ENCODE measurements at regions of chr1 and their contacts with region 1.

Region 1: GRCh38 chr1:224851210-224851847 is 78.1 kb upstream of the DNAH14 start:
- DNase-seq: peak; percentile 85
- H3K4me3 Mint-ChIP-seq: no peak overlapping the region
- H3K27ac Mint-ChIP-seq: no peak overlapping the region
- H3K4me1 Mint-ChIP-seq: peaks cover 6% of the 10 kb centered on the region
- H3K27me3 Mint-ChIP-seq: peaks cover 9% of the 10 kb centered on the region
- CTCF ChIP-seq: peak; percentile 98

Region 2: DNA sequence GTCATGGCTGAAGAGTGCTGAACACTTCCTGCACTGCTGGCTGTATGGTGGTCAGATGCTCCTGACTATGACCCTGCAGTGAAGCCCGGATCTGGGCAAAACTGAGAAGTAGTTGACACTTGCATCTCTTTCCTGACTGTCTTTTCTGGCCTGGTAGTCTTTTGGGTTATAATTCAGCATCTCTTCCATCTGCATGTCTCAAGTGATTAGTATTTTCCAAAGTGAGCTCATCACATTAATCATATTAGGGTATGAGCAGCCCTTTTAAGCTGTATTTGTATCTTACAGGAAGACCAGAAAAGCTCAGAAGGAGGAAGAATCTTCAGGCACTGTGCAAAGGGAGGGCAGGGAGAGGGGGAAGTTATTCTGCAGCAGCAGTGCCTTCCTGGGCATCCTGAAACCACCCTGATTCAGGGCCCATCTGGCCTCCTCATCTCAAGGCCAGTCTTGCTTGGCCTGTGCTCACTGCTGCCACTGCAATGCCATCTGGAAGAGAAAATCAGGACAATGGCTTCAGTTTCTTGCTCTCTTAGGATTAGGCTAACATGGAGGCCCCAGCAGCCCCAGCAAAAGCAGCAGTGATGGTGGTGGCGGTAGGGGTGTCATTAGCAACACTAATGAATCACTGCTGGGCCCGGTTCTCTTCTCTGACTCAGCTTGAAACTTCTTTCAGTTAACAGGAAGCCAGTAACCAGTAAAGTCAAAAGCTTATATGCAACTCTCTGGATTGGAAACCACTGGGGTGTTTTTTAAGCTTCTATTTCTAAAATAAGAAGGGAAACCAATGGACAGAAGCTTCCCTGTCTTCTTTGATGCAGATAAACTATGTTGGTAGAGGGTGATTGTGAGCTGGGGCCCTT is 353.4 kb before region 1 on chr1:
- CTCF ChIA-PET with region 1: interaction called, 12 read pairs
- POLR2A ChIA-PET with region 1: interaction called, 3 read pairs
- intact Hi-C with region 1: no loop called
- DNase-seq: peak; percentile 97
- H3K4me3 Mint-ChIP-seq: peak overlapping the region; percentile 50
- H3K27ac Mint-ChIP-seq: peak overlapping the region; percentile 86
- H3K4me1 Mint-ChIP-seq: peaks cover 69% of the 10 kb centered on the region
- H3K27me3 Mint-ChIP-seq: no peaks in the 10 kb centered on the region
- CTCF ChIP-seq: peak; percentile 6

Region 3: DNA sequence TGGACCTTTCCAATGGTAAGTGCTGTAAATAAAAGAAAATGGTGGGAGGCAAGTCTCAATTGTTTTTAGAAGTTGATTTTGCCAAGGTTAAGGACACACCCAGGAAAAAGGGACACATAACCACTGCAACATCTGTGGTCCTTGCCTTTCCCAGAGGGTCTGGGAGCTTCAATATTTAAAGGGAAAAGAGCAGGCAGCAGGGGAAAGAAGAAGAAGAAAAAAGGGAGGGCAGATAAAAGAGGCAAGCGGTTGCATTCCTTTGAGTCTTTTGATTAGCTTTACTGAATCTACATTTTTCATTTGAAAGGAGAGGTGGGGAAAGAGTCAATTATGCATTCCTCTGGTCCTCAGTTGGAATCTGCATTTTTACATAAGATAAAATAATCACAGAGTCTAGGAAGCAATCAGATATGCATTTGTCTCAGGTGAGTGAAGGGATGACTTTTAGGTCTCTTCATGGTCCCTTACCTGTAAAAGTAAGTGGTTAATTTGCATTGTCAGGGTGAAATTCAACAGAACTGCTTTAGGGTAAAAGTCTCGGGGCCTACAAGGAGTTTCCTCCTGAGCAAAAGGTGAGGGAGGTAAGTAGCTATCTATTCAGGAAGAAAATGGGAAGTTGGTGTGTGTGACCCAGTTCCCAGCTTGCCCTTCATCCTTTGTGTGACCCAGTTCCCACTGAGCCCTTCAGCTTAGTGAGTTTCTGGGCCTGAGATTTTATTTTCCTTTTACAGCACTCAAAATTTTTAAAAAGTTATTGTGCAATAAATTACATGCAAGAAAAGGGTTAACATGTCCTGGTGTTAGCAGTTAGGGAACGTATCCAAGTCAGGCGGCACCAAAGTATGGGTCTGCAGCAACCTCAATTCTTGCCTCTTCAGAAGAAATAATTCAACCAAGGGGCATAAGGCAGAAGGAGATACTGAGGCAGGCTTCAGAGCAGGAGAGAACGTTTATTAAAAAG is 243.9 kb before region 1 on chr1:
- CTCF ChIA-PET with region 1: interaction called, 10 read pairs
- POLR2A ChIA-PET with region 1: no interaction called
- intact Hi-C with region 1: no loop called
- DNase-seq: no peak
- H3K4me3 Mint-ChIP-seq: no peak overlapping the region
- H3K27ac Mint-ChIP-seq: no peak overlapping the region
- H3K4me1 Mint-ChIP-seq: no peaks in the 10 kb centered on the region
- H3K27me3 Mint-ChIP-seq: no peaks in the 10 kb centered on the region
- CTCF ChIP-seq: no peak

Region 4: DNA sequence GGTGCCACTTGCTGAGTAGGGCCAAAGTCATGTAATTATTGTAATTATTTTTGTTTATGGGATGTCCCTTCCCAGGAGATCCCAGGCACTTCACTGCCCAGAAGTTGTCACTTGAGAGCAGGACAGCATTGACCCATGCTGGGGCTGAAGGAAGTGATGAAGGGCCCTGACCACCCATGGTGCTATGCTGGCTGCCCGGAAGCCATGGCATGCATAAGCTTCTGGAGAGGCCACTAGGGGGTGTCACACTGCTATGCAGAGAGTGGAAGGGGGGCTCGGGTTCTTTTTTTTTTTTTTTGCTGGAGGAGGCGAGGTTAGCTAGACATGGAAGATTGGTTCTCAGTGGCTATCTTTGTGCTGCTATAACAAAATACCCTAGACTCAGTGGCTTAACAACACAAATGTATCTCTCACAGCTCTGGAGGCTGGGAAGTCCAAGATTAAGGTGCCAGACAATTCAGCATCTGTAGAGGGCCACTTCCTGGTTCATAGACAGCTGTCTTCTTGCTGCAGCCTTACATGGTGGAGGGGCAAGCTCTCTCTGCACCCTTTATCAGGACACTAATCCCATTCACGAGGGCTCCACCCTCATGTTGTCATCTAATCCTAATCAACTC is 150.3 kb before region 1 on chr1:
- CTCF ChIA-PET with region 1: interaction called, 12 read pairs
- POLR2A ChIA-PET with region 1: no interaction called
- intact Hi-C with region 1: loop called (anchors 1 kb)
- DNase-seq: peak; percentile 58
- H3K4me3 Mint-ChIP-seq: no peak overlapping the region
- H3K27ac Mint-ChIP-seq: no peak overlapping the region
- H3K4me1 Mint-ChIP-seq: no peaks in the 10 kb centered on the region
- H3K27me3 Mint-ChIP-seq: no peaks in the 10 kb centered on the region
- CTCF ChIP-seq: peak; percentile 39

Region 5: GRCh38 chr1:224781800-224782199 is 69.5 kb before region 1 on chr1:
- CTCF ChIA-PET with region 1: interaction called, 11 read pairs
- POLR2A ChIA-PET with region 1: interaction called, 4 read pairs
- intact Hi-C with region 1: no loop called
- DNase-seq: no peak
- H3K4me3 Mint-ChIP-seq: no peak overlapping the region
- H3K27ac Mint-ChIP-seq: no peak overlapping the region
- H3K4me1 Mint-ChIP-seq: peaks cover 12% of the 10 kb centered on the region
- H3K27me3 Mint-ChIP-seq: no peaks in the 10 kb centered on the region
- CTCF ChIP-seq: no peak

Region 6: DNA sequence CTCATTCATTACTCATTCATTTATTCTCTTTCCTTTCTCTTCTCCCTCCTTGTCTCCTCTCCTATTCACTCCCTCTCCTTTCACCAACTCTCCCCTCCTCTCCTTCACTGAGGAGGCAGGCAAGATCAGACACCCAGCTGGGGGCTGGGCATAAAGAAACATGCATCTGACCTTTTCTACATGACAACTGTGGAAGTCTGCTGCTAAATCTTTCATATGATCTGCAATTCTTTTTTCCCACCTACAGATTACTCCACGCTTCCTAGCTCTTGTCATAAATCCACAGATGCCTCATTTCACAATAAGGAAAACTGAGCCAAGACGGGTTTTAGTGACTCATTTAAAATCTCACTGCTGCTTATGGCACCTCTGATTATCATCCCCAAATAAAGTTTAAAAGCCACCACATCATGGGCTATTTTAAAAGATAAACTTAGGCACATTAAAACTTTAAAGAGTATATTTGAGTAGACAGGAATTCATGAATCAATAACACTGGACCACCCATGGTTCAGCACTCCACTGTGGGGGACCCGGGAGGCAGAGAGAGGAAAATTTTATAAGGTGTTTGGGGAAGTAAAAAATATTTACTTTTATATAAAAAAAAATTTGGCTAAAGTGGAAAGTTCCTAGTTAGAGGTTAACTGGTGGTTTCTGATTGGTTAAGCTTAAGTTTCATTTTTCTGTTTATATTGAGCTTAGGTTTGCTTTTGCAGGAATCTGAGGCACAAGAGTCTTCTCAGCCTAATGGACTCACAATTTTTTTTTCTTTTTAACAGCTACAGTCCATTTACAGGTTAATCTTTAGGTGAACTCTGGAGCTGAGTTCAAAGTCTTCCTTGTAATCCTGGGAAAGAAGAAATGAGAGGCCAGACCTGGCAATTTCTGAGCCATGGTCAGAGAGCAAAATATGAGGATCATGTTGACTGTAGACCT is 22.4 kb after region 1 on chr1:
- CTCF ChIA-PET with region 1: interaction called, 64 read pairs
- POLR2A ChIA-PET with region 1: no interaction called
- intact Hi-C with region 1: no loop called
- DNase-seq: peak; percentile 93
- H3K4me3 Mint-ChIP-seq: no peak overlapping the region
- H3K27ac Mint-ChIP-seq: no peak overlapping the region
- H3K4me1 Mint-ChIP-seq: no peaks in the 10 kb centered on the region
- H3K27me3 Mint-ChIP-seq: peaks cover 13% of the 10 kb centered on the region
- CTCF ChIP-seq: no peak